Endothelial cell of umbilical vein (primary cell): ENCODE measurements at regions of chr22 and their contacts with region 1.

Region 1: DNA sequence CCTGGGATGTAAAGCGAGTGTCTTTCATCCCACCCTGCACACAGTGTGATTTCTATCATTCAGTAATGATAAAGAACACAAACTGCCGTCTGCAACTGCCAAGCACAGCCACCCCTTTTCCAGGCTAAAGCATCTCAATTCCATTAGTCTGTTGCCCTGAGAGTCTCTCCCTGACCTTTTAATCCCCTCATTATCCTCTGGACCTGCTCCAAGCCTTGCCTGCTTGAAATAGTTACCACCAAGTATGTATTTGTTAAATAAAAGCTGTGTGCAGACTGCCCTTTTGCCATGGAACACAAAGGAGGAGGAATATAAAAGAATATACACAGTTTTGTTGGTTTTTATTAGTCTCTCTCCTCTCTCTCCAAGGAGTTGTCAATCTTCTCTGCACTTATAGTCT is 13.0 kb downstream of the GRAP2 start:
- DNase-seq: no peak
- H3K4me3 ChIP-seq: no peak overlapping the region
- H3K27ac ChIP-seq: no peak overlapping the region
- H3K4me1 ChIP-seq: no peaks in the 10 kb centered on the region
- H3K27me3 ChIP-seq: peaks cover 9 to 23% of the 10 kb centered on the region in 2 experiments
- CTCF ChIP-seq: no peak
- POLR2A ChIP-seq: no peak

Region 2: DNA sequence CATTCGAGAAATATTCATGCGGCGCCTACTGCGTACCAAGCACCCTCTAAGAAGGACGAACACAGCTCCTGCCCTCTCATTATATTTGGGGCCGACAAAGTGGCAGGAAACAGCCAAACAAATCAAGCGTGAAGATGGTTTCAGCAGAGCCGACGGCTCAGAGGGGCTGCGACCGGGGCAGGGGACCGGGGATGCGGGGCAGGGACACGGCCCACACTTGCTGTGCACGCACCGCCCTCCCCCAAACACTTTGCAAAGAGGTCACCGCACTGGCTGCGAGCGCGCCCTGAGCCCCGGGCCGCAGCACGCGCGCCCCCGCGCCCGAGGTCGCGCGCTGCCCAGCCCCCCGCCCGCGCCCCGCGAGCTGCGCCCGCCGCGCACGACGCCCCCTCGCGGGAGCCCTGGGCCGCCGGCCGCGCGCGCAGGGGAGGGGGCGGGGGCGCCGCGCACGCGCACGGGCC is 564.4 kb before region 1 on chr22:
- CTCF ChIA-PET with region 1: no interaction called
- POLR2A ChIA-PET with region 1: no interaction called
- dilution Hi-C with region 1: no loop called
- intact Hi-C with region 1: no loop called
- DNase-seq: no peak
- H3K4me3 ChIP-seq: peak overlapping the region; percentile 58 to 61 (median 60)
- H3K27ac ChIP-seq: no peak overlapping the region
- H3K4me1 ChIP-seq: peaks cover 4% of the 10 kb centered on the region
- H3K27me3 ChIP-seq: peaks cover under 1 to 2% of the 10 kb centered on the region in 2 experiments
- CTCF ChIP-seq: no peak
- POLR2A ChIP-seq: no peak

Region 3: DNA sequence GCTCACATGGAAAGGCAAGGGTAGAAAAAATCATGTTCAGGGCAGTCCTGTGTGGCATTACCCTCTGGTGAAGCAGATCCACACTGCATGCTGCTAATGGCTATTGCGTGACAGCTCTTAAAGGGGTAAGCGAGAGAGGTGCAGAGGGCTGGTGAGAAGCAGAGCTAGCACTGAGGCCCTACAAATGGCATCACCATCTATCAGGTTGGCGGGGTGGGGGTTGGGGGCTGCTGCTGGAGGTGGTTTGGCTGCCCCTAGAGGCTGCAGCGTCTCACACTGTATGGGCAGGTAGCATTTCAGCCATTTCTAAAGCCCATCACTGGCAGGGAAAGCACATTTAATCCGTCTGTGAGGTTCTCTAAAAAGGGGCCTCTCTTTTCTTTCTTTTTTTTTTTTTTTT is 29.5 kb after region 1 on chr22:
- CTCF ChIA-PET with region 1: no interaction called
- POLR2A ChIA-PET with region 1: no interaction called
- dilution Hi-C with region 1: no loop called
- intact Hi-C with region 1: loop called (anchors 1 kb)
- DNase-seq: no peak
- H3K4me3 ChIP-seq: no peak overlapping the region
- H3K27ac ChIP-seq: no peak overlapping the region
- H3K4me1 ChIP-seq: no peaks in the 10 kb centered on the region
- H3K27me3 ChIP-seq: peaks cover 4 to 5% of the 10 kb centered on the region in 2 experiments
- CTCF ChIP-seq: peak in 1 of 2 donors; percentile 3
- POLR2A ChIP-seq: no peak